HepG2 (cell line): ENCODE measurements at regions of chr9 and their contacts with region 1.

Region 1: GRCh38 chr9:4904322-4905134 is 80.5 kb upstream of the JAK2 start:
- DNase-seq: no peak
- ATAC-seq: no peak
- H3K4me3 ChIP-seq: no peak overlapping the region
- H3K27ac ChIP-seq: no peak overlapping the region
- H3K4me1 ChIP-seq: peaks cover 19% of the 10 kb centered on the region
- H3K27me3 ChIP-seq: no peaks in the 10 kb centered on the region
- CTCF ChIP-seq: no peak
- EP300 ChIP-seq: no peak
- POLR2A ChIP-seq: no peak
- RAD21 ChIP-seq: no peak

Region 2: GRCh38 chr9:4837261-4838188 is 67.0 kb before region 1 on chr9:
- CTCF ChIA-PET with region 1: no interaction called
- POLR2A ChIA-PET with region 1: interaction called, 14 read pairs
- in situ Hi-C with region 1: no loop called
- intact Hi-C with region 1: no loop called
- DNase-seq: peak; percentile 81
- ATAC-seq: peak; percentile 54
- H3K4me3 ChIP-seq: peak overlapping the region in 1 of 3 experiments; percentile 31; a peak in 2 of 6 replicates
- H3K27ac ChIP-seq: peak overlapping the region; percentile 75
- H3K4me1 ChIP-seq: peaks cover 100% of the 10 kb centered on the region
- H3K27me3 ChIP-seq: no peaks in the 10 kb centered on the region
- CTCF ChIP-seq: no peak
- EP300 ChIP-seq: 0 out of 4 replicates have a peak, but pooled peaks of 1 of the 2 experiments have one; percentile 33
- POLR2A ChIP-seq: 0 out of 4 replicates have a peak, but pooled peaks of 1 of the 2 experiments have one; percentile 23
- RAD21 ChIP-seq: no peak

Region 3: DNA sequence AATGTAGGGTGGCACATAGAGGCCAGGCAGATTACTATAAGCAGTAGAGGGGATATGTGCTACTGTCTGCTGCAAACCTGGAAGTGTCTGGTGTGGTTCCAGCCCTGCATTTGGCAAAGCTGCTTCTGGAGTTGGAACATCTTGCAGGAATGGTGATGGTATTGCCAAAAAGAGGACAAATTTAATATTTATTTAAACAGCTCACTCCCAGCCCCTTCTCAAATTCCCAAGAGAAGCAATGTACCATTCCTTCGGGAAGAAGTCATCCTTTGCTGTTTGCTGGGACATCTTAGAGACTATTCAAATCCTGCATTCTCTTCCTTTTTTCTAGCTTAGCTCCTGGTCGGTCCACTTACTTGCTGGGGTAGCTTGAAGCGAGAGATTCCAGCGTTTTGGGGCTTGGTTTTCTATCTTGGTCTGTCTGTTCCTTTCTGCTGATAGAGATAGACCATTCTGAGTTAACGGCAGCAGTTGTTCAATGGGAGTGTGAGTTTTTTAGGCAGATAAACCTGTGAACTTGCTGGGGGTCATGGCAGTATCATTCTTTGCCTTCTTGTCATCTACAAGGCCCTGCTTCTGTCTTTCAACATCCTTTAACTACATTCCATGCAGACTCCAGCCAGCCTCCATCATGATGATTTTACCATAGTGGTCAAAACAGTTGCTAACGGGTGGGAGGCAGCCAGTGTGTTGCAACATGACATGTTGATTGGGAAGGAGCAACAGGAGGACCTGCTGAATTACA is 41.9 kb before region 1 on chr9:
- CTCF ChIA-PET with region 1: no interaction called
- POLR2A ChIA-PET with region 1: interaction called, 3 read pairs
- in situ Hi-C with region 1: no loop called
- intact Hi-C with region 1: loop called (anchors 5 kb)
- DNase-seq: no peak
- ATAC-seq: peak; percentile 23
- H3K4me3 ChIP-seq: no peak overlapping the region
- H3K27ac ChIP-seq: peak overlapping the region; percentile 53
- H3K4me1 ChIP-seq: peaks cover 29% of the 10 kb centered on the region
- H3K27me3 ChIP-seq: no peaks in the 10 kb centered on the region
- CTCF ChIP-seq: no peak
- EP300 ChIP-seq: no peak
- POLR2A ChIP-seq: no peak
- RAD21 ChIP-seq: no peak